Left ventricle myocardium inferior (tissue), 1 donor: ENCODE measurements at regions of chr1 and their contacts with region 1.

Region 1: DNA sequence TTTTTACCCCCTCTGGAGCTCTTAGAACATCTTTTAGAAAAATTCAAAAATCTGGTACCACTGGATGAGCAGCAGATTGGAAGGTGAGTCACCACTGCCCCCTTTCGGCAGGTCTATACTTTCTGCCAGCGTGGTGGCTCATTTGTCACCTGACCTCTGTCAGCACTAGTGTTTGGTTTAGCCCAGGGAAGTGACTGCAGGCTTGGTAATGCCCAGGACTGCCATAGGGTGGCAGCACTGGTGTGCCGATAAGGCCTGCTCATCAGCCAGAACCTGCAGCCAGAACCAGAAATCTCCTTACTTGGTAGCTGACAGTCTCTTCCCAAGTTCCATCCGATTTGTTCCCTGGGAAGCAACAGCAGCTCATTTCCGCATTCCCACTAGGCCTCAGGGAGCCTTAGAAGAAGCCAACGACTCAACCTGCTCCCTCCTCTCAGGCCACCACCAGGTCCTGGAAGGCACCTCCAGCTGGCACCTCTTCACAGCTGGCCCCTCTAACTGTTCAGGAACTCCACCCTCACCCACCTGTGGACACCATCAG is 6.8 kb downstream of the SMIM12 start:
- DNase-seq: peak; percentile 84
- H3K4me3 ChIP-seq: no peak overlapping the region
- H3K27ac ChIP-seq: peak overlapping the region; percentile 70
- H3K4me1 ChIP-seq: peaks cover 73% of the 10 kb centered on the region
- H3K27me3 ChIP-seq: no peaks in the 10 kb centered on the region
- CTCF ChIP-seq: peak; percentile 95

Region 2: GRCh38 chr1:34787461-34788420 is 65.0 kb before region 1 on chr1:
- intact Hi-C with region 1: loop called (anchors 2 kb)
- DNase-seq: no peak
- H3K4me3 ChIP-seq: no peak overlapping the region
- H3K27ac ChIP-seq: peak overlapping the region; percentile 78
- H3K4me1 ChIP-seq: peaks cover 33% of the 10 kb centered on the region
- H3K27me3 ChIP-seq: peaks cover 38% of the 10 kb centered on the region
- CTCF ChIP-seq: peak; percentile 54

Region 3: DNA sequence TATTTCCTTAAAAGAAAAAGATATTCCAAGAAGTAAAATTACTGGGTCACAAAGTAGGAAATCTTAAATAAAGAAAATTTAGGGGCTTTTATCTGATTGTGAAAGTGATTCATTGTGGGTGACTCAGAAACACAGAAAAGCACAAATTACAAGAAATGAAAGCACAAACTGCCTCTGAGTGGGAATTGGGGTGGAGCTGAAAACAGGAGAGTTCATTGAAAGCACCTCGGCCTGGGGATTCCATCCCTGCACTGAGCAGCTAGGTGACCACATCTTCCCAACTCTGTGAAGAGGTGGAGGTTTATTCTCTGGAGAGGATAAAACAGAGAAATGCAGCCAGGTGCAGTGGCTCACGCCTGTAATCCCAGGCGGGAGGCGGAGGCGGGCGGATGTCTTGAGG is 52.5 kb before region 1 on chr1:
- intact Hi-C with region 1: no loop called
- DNase-seq: no peak
- H3K4me3 ChIP-seq: no peak overlapping the region
- H3K27ac ChIP-seq: peak overlapping the region; percentile 17
- H3K4me1 ChIP-seq: peaks cover 22% of the 10 kb centered on the region
- H3K27me3 ChIP-seq: no peaks in the 10 kb centered on the region
- CTCF ChIP-seq: no peak